Activated CD4-positive, alpha-beta T cell treated with anti-CD3 and anti-CD28 coated beads, Interleukin-2, amount 10 ng/mL, durations not matched to agents 24 days and 14 days (primary cell): ENCODE measurements at regions of chr16 and their contacts with region 1.

Region 1: GRCh38 chr16:31487720-31488467 is 5.0 kb downstream of the SLC5A2 start:
- DNase-seq: peak; percentile 91
- H3K4me3 Mint-ChIP-seq: peak overlapping the region; percentile 90
- H3K27ac Mint-ChIP-seq: no peak overlapping the region
- H3K4me1 Mint-ChIP-seq: peaks cover 5% of the 10 kb centered on the region
- H3K27me3 Mint-ChIP-seq: peaks cover 18% of the 10 kb centered on the region

Region 2: GRCh38 chr16:31476303-31477219 is 11.3 kb before region 1 on chr16:
- intact Hi-C with region 1: loop called (anchors 1 kb)
- DNase-seq: peak; percentile 93
- H3K4me3 Mint-ChIP-seq: peak overlapping the region; percentile 90
- H3K27ac Mint-ChIP-seq: peak overlapping the region; percentile 66
- H3K4me1 Mint-ChIP-seq: peaks cover 17% of the 10 kb centered on the region
- H3K27me3 Mint-ChIP-seq: peaks cover 43% of the 10 kb centered on the region